Right ventricle myocardium inferior (tissue), 1 donor: ENCODE measurements at regions of chr13 and their contacts with region 1.

Region 1: GRCh38 chr13:51249770-51250741 is 27.9 kb downstream of the FAM124A start:
- DNase-seq: no peak
- ATAC-seq: no peak

Region 2: GRCh38 chr13:51125498-51126226 is 124.4 kb before region 1 on chr13:
- intact Hi-C with region 1: no loop called
- DNase-seq: no peak
- ATAC-seq: peak; percentile 59

Region 3: DNA sequence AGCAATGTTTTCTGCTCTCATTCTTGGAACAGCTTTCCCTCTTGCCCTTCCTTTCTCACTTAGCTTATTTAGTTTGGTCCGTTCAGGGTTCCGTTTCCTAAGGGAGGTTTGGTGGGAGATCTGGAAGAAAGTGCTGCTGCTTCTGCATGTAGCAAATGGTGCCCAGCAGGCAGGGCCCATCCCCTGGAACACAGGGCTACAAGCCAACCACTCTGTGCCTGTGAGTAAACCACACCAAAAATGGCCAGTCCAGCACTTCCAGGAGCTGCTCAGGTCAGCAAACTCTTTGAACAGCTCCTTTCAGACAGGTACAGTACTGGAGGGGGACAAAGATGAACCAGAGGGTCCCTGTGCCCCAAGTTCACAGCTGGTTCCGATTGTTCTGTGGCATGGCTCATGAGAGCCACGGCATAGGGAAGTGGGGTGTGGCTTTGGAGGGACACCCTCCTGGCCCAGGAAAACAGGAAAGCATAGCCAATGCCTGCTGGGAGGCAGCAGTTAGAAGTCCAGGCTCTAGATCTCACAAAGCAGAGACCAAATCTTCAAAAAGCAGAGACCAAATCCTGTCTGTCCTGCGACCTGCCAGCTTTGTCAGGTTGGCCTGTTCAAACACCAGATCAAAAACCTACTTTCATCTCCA is 11.7 kb after region 1 on chr13:
- intact Hi-C with region 1: loop called (anchors 2 kb)
- DNase-seq: no peak
- ATAC-seq: peak; percentile 19